Heart left ventricle (tissue), 16 donors: ENCODE measurements at regions of chr11 and their contacts with region 1.

Region 1: DNA sequence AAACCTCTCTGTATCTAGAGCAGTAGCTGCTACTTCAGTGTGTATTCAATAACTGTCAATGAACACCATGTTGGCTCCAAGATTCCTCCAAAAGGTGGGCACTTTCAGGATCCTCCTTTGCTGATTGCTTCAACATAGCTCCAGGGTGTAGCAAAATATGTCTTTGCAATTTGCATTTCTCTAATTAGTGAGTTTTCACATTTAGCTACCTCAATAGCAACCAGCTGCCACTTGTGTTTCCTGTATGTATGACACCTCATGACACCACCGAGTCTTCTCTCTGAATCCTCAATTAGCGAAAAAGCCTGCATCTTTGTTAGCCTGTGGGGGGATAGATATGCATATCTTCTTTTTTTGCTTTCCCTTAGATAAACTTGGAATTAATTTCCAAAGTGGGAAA is 898.3 kb upstream of the FAT3 start:
- DNase-seq: no peak
- ATAC-seq: no peak
- H3K4me3 ChIP-seq: no peak overlapping the region
- H3K27ac ChIP-seq: no peak overlapping the region
- H3K4me1 ChIP-seq: no peaks in the 10 kb centered on the region
- H3K27me3 ChIP-seq: no peaks in the 10 kb centered on the region
- CTCF ChIP-seq: no peak
- POLR2A ChIP-seq: no peak

Region 2: DNA sequence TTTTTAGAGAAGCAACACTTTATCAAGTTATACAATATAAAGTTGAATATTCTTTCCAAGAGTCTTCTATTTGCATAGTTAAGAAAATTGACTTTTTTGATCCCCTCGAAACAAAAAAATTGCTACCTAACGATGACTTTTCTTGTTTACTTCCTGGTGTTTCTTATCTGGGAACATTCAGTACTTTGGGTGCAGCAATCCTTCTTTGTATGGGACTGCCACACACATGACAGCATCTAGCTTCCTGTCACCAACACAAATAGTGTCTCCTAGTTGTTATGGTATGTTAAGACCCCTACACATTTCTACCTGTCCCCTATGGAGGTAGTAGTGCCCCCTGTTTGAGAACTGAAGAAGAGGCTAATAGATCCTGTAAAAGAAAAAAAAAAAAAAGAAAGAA is 56.7 kb after region 1 on chr11:
- intact Hi-C with region 1: loop called in 1 of 10 experiments (anchors 10 kb)
- DNase-seq: no peak
- ATAC-seq: no peak
- H3K4me3 ChIP-seq: no peak overlapping the region
- H3K27ac ChIP-seq: no peak overlapping the region
- H3K4me1 ChIP-seq: no peaks in the 10 kb centered on the region
- H3K27me3 ChIP-seq: no peaks in the 10 kb centered on the region
- CTCF ChIP-seq: no peak
- POLR2A ChIP-seq: no peak